MCF 10A (cell line): ENCODE measurements at regions of chr9 and their contacts with region 1.

Region 1: GRCh38 chr9:90870621-90871326 is 69.2 kb downstream of the SYK start:
- DNase-seq: peak; percentile 59
- H3K4me3 Mint-ChIP-seq: no peak overlapping the region
- H3K27ac Mint-ChIP-seq: no peak overlapping the region
- H3K4me1 Mint-ChIP-seq: no peaks in the 10 kb centered on the region
- H3K27me3 Mint-ChIP-seq: no peaks in the 10 kb centered on the region
- CTCF ChIP-seq: peak; percentile 80

Region 2: DNA sequence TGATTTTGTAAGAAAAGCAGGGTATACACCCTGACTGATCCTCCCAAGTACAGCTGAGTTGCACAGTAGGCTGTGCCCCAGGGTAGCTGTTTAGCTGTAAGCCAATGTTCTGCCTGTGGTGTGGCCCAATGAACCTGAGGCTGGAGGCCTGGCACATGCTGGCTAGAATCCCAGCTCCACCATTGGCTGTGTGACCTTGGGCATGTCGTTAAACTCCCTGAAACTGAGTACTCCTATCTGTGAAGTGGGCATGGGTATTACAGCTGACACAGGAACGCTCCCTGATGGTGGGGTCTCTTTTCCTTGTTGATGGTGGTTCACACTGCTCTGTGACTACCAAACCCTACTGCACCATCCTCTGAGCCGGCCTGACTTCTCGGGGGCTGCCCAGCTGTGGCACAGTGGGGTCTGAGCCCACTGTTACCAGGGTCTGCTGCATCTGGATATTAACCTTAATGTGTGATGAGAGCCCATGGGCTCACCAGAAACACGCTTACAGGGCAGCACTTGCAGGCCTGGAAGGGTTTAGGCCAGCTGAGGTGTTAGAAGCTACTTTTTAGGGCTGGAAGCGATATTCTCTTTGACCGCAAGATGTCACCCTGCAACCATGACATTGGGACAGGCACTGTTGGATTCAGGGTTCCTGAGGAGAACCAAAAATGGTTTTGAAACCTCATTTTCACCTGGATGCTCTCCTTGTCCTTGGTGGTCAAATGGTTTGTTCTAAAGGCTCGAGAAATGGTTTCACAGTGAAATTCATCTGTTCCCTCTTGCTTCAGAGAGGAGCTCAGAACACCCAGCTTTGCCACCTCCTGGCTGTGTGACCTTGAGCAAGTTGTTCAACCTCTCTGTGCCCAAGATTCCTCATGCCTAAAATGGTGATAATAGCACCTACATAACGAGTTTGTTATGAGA is 1272.8 kb before region 1 on chr9:
- CTCF ChIA-PET with region 1: interaction called, 10 read pairs
- POLR2A ChIA-PET with region 1: no interaction called
- intact Hi-C with region 1: loop called (anchors 10 kb)
- DNase-seq: peak; percentile 78
- H3K4me3 Mint-ChIP-seq: no peak overlapping the region
- H3K27ac Mint-ChIP-seq: no peak overlapping the region
- H3K4me1 Mint-ChIP-seq: peaks cover 4% of the 10 kb centered on the region
- H3K27me3 Mint-ChIP-seq: peaks cover 60% of the 10 kb centered on the region
- CTCF ChIP-seq: peak; percentile 74

Region 3: DNA sequence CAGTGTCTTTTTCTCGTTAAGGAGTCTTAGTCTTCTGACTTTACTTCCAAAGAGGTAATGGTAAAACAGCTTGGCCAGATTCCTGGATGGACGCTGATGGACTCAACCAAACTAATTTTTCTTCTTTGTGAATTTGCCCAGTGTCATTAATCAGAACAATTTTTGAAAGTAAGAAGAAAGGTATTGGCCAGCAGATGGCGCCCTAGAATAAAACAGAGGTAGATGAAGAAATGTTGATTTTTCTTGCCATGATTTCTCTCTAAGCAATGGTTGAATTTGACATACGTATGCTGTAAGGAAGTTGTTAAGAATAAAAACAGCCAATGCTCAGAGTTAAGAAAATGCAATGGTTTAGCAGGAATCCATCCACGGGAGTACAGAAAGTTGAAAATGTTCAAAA is 728.2 kb before region 1 on chr9:
- CTCF ChIA-PET with region 1: interaction called, 15 read pairs
- POLR2A ChIA-PET with region 1: no interaction called
- intact Hi-C with region 1: loop called (anchors 10 kb)
- DNase-seq: peak; percentile 59
- H3K4me3 Mint-ChIP-seq: no peak overlapping the region
- H3K27ac Mint-ChIP-seq: no peak overlapping the region
- H3K4me1 Mint-ChIP-seq: no peaks in the 10 kb centered on the region
- H3K27me3 Mint-ChIP-seq: peaks cover 79% of the 10 kb centered on the region
- CTCF ChIP-seq: peak; percentile 35

Region 4: DNA sequence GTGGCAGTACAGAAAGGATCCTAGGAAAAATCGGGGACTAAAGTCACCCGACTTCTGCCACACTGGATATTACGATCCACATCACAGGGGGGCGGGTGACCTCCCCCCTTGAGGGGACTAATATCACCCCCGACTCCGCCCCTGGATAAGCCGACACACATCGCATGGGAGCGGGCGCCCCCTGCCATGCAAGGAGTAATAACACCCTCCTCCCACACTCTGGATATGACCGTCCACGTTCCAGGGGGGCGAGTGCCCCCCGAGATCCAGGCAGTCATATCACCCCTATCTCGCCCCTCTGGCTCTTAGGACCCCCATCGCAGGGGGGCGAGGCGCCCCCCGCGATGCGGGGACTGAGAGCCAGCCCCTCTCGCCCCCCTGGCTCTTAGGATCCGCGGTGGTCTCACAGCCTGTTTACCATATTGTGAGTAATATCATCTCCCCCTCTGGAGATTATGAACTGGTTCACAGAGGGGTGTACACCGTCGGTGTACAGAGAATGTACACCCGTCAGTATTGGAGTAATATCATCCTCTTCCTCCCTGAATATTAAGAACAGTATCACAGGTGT is 651.1 kb before region 1 on chr9:
- CTCF ChIA-PET with region 1: interaction called, 11 read pairs
- POLR2A ChIA-PET with region 1: no interaction called
- intact Hi-C with region 1: no loop called
- DNase-seq: peak; percentile 24
- H3K4me3 Mint-ChIP-seq: no peak overlapping the region
- H3K27ac Mint-ChIP-seq: no peak overlapping the region
- H3K4me1 Mint-ChIP-seq: no peaks in the 10 kb centered on the region
- H3K27me3 Mint-ChIP-seq: peaks cover 24% of the 10 kb centered on the region
- CTCF ChIP-seq: peak; percentile 38

Region 5: DNA sequence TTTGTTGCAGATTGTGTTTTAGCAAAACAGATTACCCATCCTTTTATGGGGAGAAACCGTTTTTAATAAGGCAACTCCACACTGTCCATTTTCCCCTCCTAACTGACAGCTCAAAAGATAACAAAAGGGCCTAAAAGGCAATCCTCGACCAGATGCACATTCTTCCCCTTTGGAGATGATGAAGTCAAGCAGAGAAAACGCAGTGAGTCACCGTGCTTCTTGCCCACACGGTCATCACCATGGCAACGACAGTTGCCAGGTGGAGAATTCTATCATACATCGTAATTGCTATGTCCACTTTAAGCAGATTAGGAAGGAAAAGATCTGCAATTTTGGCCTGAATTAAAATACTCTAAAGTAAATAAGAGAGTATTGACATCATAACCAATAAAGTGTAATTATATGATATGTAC is 324.5 kb before region 1 on chr9:
- CTCF ChIA-PET with region 1: no interaction called
- POLR2A ChIA-PET with region 1: no interaction called
- intact Hi-C with region 1: loop called (anchors 5 kb)
- DNase-seq: peak; percentile 60
- H3K4me3 Mint-ChIP-seq: no peak overlapping the region
- H3K27ac Mint-ChIP-seq: peak overlapping the region; percentile 29
- H3K4me1 Mint-ChIP-seq: no peaks in the 10 kb centered on the region
- H3K27me3 Mint-ChIP-seq: peaks cover 52% of the 10 kb centered on the region
- CTCF ChIP-seq: no peak

Region 6: GRCh38 chr9:90642570-90643539 is 227.9 kb before region 1 on chr9 and contains the start of gene DIRAS2:
- CTCF ChIA-PET with region 1: no interaction called
- POLR2A ChIA-PET with region 1: no interaction called
- intact Hi-C with region 1: loop called (anchors 2 kb)
- DNase-seq: peak; percentile 33
- H3K4me3 Mint-ChIP-seq: peak within 1 kb of the TSS; percentile 69
- H3K27ac Mint-ChIP-seq: no peak within 1 kb of the TSS
- H3K4me1 Mint-ChIP-seq: no peaks in the 10 kb centered on the region
- H3K27me3 Mint-ChIP-seq: peaks cover 100% of the 10 kb centered on the region
- CTCF ChIP-seq: peak; percentile 41
- total RNA-seq, gene DIRAS2: not detected in 2 replicates

Region 7: DNA sequence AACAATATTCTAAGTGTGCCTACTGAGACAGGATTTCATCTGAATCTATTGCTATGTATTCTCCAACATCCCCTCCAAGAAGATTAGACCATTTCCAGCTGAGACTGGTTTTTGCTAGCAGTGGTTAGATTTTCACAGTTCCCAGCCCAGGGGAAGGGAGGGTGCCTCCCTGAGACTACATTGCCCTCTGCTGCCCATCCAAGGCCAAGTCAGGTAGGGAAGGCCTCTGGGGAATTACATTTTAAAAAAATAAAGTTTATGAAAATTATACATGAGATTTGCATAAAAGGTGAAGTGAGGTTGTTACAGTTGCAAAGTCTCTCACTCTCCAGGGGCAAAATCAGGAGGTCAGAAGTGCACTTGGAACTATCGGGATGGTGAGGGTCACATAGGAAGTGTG is 97.2 kb before region 1 on chr9:
- CTCF ChIA-PET with region 1: interaction called, 3 read pairs
- POLR2A ChIA-PET with region 1: no interaction called
- intact Hi-C with region 1: loop called (anchors 5 kb)
- DNase-seq: peak; percentile 24
- H3K4me3 Mint-ChIP-seq: no peak overlapping the region
- H3K27ac Mint-ChIP-seq: no peak overlapping the region
- H3K4me1 Mint-ChIP-seq: no peaks in the 10 kb centered on the region
- H3K27me3 Mint-ChIP-seq: peaks cover 23% of the 10 kb centered on the region
- CTCF ChIP-seq: peak; percentile 32